H1 (cell line): ENCODE measurements at regions of chr4 and their contacts with region 1.

Region 1: DNA sequence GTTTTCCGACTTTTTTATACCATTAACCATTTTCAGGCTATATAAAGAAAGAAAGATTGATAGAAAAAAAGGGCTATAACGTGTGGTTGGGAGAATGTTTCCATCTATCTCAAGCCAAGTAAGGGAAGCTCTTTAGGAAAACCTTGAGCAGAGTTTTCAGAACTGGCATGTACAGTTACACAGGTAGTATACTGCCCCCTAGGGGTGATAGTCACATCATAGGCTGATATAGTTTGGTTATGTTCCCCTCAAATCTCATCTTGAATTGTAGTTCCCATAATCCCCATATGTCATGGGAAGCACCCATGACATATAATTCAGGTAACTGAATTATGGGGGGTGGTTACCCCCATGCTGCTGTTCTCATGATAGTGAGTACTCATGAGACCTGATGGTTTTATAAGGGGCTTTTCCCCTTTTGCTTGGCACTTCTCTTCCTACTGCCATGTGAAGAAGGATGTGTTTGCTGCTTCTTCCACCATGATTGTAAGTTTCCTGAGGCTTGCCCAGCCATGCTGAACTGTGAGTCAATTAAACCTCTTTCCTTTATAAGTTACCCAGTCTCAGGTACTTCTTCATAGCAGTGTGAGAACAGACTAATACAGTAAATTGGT is 186.8 kb downstream of the TMA16 start:
- DNase-seq: no peak
- H3K4me3 ChIP-seq: no peak overlapping the region
- H3K27ac ChIP-seq: no peak overlapping the region
- H3K4me1 ChIP-seq: no peaks in the 10 kb centered on the region
- H3K27me3 ChIP-seq: no peaks in the 10 kb centered on the region
- CTCF ChIP-seq: peak in 2 of 3 experiments; percentile 56 to 68; a peak in 3 of 4 replicates
- EP300 ChIP-seq: no peak
- POLR2A ChIP-seq: no peak
- RAD21 ChIP-seq: peak; percentile 71 to 76

Region 2: DNA sequence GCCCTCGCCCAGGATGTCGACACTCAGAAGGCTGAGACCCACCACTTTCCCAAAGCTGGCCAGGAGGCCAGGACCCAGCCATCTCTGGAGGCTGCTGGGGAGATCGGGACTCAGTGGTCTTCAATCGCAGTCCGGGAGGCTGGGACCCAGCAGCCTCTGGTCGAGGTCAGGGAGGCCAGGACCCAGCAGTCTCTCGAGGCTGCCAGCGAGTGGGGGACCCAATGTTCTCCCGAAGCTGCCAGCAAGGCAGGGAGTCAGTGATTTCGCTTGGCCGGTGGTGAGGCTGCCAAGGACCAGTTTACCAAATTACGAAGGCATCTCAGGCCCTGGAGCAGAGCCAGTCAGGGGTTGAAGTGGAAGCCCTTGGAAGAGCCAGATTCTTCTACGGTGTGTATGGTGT is 696.2 kb before region 1 on chr4:
- CTCF ChIA-PET with region 1: no interaction called
- POLR2A ChIA-PET with region 1: no interaction called
- DNase-seq: no peak
- H3K4me3 ChIP-seq: no peak overlapping the region
- H3K27ac ChIP-seq: no peak overlapping the region
- H3K4me1 ChIP-seq: no peaks in the 10 kb centered on the region; a peak in 1 of 7 replicates
- H3K27me3 ChIP-seq: no peaks in the 10 kb centered on the region
- CTCF ChIP-seq: no peak
- EP300 ChIP-seq: no peak
- POLR2A ChIP-seq: no peak
- RAD21 ChIP-seq: no peak

Region 3: DNA sequence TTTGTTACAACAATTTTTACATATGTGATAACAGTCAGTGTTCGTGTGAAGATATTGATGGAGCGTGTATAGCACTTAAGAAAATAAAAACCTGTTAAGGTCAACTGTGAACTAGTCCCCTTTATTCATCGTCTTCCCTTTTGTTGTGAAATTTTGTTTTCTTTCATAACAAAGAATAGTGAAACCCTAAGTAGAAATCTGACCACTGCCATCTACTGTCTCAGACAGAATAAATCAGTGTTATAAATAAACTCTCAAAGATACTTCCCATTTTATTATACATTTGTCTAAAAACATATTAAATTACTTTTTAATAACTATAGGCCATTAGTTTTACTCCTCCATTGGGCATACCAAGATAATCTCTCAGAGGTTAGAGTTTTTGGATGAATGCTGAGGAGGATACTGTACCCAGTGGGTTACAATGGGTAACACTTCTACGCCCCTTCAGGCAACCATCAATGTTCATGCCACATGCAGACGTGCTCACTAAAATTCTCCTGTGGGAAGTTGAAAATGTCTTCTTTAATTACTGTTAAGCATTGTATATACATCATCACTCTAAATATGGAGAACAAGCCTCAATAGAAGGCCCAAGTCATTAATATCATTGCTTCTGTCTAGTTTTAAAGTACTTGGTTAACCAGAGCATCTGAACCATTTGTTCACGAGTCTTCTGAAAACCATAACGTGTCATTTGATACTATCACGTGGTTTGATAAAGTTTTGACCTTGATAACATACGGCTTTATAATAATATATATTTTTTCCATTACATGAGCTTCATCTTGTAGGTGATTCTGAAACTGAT is 15.6 kb before region 1 on chr4:
- CTCF ChIA-PET with region 1: interaction called, 14 read pairs
- POLR2A ChIA-PET with region 1: no interaction called
- DNase-seq: no peak
- H3K4me3 ChIP-seq: no peak overlapping the region
- H3K27ac ChIP-seq: no peak overlapping the region
- H3K4me1 ChIP-seq: no peaks in the 10 kb centered on the region
- H3K27me3 ChIP-seq: no peaks in the 10 kb centered on the region
- CTCF ChIP-seq: no peak
- EP300 ChIP-seq: no peak
- POLR2A ChIP-seq: no peak
- RAD21 ChIP-seq: no peak

Region 4: GRCh38 chr4:163694385-163694784 is 13.1 kb after region 1 on chr4:
- CTCF ChIA-PET with region 1: interaction called, 41 read pairs
- POLR2A ChIA-PET with region 1: no interaction called
- DNase-seq: no peak
- H3K4me3 ChIP-seq: no peak overlapping the region
- H3K27ac ChIP-seq: no peak overlapping the region
- H3K4me1 ChIP-seq: no peaks in the 10 kb centered on the region
- H3K27me3 ChIP-seq: no peaks in the 10 kb centered on the region
- CTCF ChIP-seq: no peak
- EP300 ChIP-seq: no peak
- POLR2A ChIP-seq: no peak
- RAD21 ChIP-seq: no peak